WTC11 (cell line): ENCODE measurements at regions of chr16 and their contacts with region 1.

Region 1: GRCh38 chr16:68264128-68265077 is at the start of gene SLC7A6:
- DNase-seq: peak; percentile 76
- ATAC-seq: peak; percentile 60
- H3K4me3 Mint-ChIP-seq: peak within 1 kb of the TSS; percentile 93
- H3K27ac Mint-ChIP-seq: peak within 1 kb of the TSS; percentile 77
- H3K4me1 Mint-ChIP-seq: peaks cover 34% of the 10 kb centered on the region
- H3K27me3 Mint-ChIP-seq: peaks cover 16% of the 10 kb centered on the region
- CTCF ChIP-seq: peak; percentile 69
- total RNA-seq, gene SLC7A6: 27.4 TPM in 3 replicates

Region 2: GRCh38 chr16:68085259-68086071 is 178.9 kb before region 1 on chr16 and contains the start of gene NFATC3:
- CTCF ChIA-PET with region 1: interaction called, 11 read pairs
- POLR2A ChIA-PET with region 1: no interaction called
- DNase-seq: peak; percentile 98
- ATAC-seq: peak; percentile 65
- H3K4me3 Mint-ChIP-seq: peak within 1 kb of the TSS; percentile 97
- H3K27ac Mint-ChIP-seq: peak within 1 kb of the TSS; percentile 78
- H3K4me1 Mint-ChIP-seq: peaks cover 20% of the 10 kb centered on the region
- H3K27me3 Mint-ChIP-seq: no peaks in the 10 kb centered on the region
- CTCF ChIP-seq: no peak
- total RNA-seq, gene NFATC3: 32.5 to 34.6 TPM (median 33.3 TPM) in 3 replicates

Region 3: GRCh38 chr16:68244903-68245853 is 19.2 kb before region 1 on chr16 and contains the start of gene PLA2G15:
- CTCF ChIA-PET with region 1: interaction called, 28 read pairs
- POLR2A ChIA-PET with region 1: no interaction called
- DNase-seq: peak; percentile 98
- ATAC-seq: peak; percentile 96
- H3K4me3 Mint-ChIP-seq: peak within 1 kb of the TSS; percentile 97
- H3K27ac Mint-ChIP-seq: peak within 1 kb of the TSS; percentile 56; the same call in 1 of the 2 replicates
- H3K4me1 Mint-ChIP-seq: peaks cover 5% of the 10 kb centered on the region
- H3K27me3 Mint-ChIP-seq: peaks cover 37% of the 10 kb centered on the region
- CTCF ChIP-seq: no peak
- total RNA-seq, gene PLA2G15: 9.4 to 10.2 TPM (median 9.8 TPM) in 3 replicates

Region 4: DNA sequence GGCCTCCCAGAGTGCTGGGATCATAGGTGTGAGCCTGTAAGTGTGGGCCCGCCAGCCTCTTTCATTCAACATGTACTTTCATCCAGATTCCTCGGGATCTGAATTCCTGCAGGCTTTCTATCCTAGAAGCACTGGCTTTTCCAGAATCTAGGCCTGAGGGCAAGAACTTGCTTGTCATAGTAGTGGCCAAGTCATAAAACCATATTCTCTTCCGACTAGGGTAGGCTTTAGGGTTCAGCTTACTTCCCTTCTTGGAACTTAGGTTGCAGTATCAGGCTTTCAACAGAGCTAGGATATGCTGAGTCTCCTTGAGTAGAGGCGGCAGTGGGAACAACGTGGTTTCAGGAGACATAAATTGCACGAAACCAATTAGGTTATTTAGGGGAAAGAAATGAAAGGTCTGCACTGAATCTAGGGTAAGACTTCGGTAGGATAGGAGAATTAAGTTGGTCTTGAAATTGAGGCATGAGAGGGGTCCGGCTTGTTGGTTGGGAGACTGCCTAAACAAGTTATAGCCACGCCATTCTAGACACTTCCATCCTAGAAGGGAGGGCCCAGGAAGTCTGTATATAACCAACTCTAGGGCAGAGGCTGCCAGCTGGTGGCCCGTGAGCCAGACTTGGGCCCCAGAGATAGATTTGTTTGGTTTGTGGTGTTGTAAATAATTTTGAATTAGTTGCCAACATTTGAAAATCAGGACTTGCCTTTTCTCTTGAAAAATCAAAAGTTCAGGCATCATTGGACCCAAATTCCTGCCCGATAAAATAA is 15.6 kb after region 1 on chr16:
- CTCF ChIA-PET with region 1: interaction called, 13 read pairs
- POLR2A ChIA-PET with region 1: interaction called, 3 read pairs
- DNase-seq: no peak
- ATAC-seq: no peak
- H3K4me3 Mint-ChIP-seq: no peak overlapping the region
- H3K27ac Mint-ChIP-seq: no peak overlapping the region
- H3K4me1 Mint-ChIP-seq: peaks cover 3% of the 10 kb centered on the region; the same call in 1 of the 2 replicates
- H3K27me3 Mint-ChIP-seq: no peaks in the 10 kb centered on the region
- CTCF ChIP-seq: no peak

Region 5: DNA sequence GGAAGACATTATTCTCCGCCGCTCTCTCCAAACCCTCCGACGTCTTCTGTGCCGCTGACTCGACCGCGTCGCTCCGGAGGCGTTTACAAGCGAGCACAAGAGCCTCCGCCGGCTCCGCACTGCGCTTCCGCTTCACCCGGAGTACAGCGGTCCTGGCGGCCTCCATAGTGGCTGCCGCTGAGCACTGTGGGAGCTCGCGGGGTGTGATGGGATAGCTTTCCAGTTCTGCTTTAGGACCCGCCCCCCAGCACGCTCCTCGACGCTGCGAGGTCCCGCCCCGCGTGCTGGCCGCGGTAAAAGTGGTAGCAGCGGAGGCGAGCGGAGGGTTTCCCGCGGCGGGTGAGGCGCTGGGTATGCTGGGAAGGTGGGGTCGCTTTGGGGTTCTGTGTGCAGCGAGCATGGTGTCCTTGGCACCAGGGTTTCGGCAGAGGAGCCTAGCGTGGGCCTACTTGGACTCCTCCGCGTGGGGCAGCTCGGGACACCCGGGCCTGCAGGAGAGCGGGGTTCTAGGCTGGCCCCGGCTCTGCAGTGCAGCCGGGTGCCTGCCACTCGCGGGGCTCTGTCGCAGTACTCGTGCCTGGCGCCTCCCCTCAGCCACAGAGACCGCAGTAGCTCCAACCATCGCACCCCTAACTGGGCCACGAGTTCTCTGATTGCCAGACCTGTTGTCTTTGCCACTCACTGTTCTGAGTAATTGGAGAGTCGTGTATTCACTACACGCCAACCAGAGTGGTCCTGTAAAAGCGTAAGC is 46.5 kb after region 1 on chr16 and contains the starts of genes PRMT7 and SLC7A6OS:
- CTCF ChIA-PET with region 1: interaction called, 41 read pairs
- POLR2A ChIA-PET with region 1: interaction called, 8 read pairs
- DNase-seq: peak; percentile 90
- ATAC-seq: peak; percentile 99
- H3K4me3 Mint-ChIP-seq: peak within 1 kb of the TSS; percentile 95
- H3K27ac Mint-ChIP-seq: peak within 1 kb of the TSS; percentile 97
- H3K4me1 Mint-ChIP-seq: peaks cover 18% of the 10 kb centered on the region
- H3K27me3 Mint-ChIP-seq: no peaks in the 10 kb centered on the region
- CTCF ChIP-seq: no peak
- total RNA-seq, gene PRMT7: 50.3 to 59.3 TPM (median 52.5 TPM) in 3 replicates
- total RNA-seq, gene SLC7A6OS: 20.5 to 22.6 TPM (median 20.7 TPM) in 3 replicates

Region 6: DNA sequence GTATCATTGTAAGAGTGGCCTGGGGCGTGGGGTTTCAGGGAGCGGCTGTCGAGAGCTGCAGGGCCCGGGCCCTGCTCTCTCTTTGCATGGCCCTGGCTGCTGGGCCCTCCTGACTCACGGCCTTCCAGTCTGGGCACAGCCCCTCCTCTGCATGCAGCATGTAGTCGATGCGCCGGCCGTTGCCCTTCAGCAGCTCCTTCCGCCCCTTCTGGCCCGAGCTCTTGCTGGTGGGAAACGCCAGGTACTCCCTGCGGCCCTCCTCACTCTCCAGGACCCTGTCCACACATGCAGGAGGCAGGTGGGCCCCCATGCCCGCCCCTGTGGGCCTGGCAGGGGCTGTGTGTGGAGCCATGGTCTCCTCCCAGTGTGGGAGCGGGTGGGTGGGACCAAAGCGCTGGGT is 97.1 kb after region 1 on chr16:
- CTCF ChIA-PET with region 1: interaction called, 19 read pairs
- POLR2A ChIA-PET with region 1: no interaction called
- DNase-seq: no peak
- ATAC-seq: no peak
- H3K4me3 Mint-ChIP-seq: no peak overlapping the region
- H3K27ac Mint-ChIP-seq: no peak overlapping the region
- H3K4me1 Mint-ChIP-seq: peaks cover 12% of the 10 kb centered on the region; the same call in 1 of the 2 replicates
- H3K27me3 Mint-ChIP-seq: no peaks in the 10 kb centered on the region
- CTCF ChIP-seq: no peak